Left cardiac atrium (tissue), 4 donors: ENCODE measurements at regions of chr15 and their contacts with region 1.

Region 1: GRCh38 chr15:71114896-71115554 is at the start of gene THSD4:
- DNase-seq: peak; percentile 80
- ATAC-seq: peak; percentile 65 to 71
- total RNA-seq, gene THSD4: 39.8 to 68.3 TPM

Region 2: DNA sequence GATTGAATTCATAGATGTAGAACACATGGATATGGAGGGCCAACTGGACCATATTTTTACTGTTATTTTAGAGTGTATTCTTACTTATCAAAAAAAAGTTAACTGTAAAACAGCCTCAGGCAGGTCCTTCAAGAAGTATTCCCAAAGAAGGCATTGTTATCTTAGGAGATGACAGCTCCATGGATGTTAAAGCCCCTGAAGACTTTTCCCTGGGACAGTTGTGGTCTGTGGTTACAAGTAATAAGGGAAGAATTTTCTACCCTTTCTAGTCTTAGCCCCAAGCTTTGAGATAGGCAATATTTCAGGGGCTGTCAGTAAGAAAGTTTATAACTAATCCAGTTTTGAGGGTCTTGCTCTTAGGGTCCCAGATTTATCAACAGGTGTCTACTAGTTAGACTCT is 159.9 kb before region 1 on chr15:
- intact Hi-C with region 1: no loop called
- DNase-seq: no peak
- ATAC-seq: no peak

Region 3: GRCh38 chr15:71151081-71151480 is 36.1 kb after region 1 on chr15:
- intact Hi-C with region 1: loop called in 1 of 2 experiments (anchors 5 kb)
- DNase-seq: no peak
- ATAC-seq: no peak

Region 4: DNA sequence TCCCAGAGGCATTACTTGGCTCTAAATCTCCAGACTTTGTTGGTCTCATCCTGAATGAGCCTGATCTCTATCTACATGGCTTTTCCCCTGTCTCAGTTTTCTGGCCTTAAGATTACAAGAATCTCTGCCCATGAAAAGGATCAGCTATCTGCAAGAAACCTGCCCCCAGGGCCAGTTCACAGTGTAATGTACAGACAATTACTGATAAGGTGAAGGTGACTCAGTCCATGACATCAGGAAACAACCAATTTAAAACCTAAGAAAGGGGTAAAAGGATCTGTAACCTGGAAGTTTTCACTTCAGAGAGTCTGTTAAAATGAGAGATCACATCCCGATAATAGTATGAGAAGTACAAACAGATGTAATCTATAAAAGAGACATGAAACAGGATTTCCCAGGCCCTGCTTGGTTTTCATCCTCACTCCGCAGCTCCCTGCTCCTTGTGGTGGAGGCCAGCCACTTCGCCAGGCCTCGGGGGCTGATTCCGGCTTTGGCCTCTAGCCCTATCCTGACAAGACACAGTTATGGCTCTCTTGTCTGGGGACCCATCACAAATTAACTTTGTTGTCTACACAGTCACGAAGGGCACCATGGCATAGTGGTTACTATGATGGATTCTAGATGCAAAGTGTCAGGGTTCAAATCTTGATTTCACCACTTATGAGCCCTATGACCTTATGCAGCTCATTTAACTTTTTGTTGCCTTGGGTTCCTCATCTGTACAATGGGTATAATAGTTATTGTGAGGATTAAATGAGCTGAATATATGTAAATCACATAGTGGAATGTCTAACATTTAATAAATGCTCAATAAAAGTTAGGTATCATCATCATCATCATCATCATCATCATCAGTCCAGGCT is 137.2 kb after region 1 on chr15:
- intact Hi-C with region 1: loop called in 1 of 2 experiments (anchors 5 kb)
- DNase-seq: no peak
- ATAC-seq: peak in 1 of 2 donors; percentile 72

Region 5: DNA sequence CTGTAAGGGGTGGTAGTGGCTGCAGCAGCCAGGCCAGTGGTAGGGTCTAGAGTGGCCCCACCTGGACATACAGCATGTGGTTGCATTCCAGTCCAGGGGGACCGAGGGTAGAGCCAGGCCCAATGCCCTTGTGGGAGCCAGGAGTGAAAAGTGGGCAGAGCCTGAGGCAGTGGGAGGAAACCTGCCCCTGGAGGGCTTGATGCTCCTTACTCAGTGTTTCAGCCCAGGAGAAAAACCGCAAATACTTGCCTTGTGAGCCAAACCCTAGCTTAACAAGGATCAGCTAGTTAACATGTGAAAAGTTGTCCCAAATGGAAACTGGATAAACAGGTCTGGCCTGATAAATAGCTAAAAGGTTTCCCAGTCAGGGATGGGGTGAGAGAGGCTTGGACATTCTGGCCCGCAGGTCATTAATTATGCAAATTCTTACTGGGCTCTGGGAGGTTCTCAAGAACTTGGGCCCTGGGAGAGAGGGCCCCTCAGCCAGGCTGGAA is 222.2 kb after region 1 on chr15:
- intact Hi-C with region 1: loop called in 1 of 2 experiments (anchors 5 kb)
- DNase-seq: no peak
- ATAC-seq: no peak

Region 6: DNA sequence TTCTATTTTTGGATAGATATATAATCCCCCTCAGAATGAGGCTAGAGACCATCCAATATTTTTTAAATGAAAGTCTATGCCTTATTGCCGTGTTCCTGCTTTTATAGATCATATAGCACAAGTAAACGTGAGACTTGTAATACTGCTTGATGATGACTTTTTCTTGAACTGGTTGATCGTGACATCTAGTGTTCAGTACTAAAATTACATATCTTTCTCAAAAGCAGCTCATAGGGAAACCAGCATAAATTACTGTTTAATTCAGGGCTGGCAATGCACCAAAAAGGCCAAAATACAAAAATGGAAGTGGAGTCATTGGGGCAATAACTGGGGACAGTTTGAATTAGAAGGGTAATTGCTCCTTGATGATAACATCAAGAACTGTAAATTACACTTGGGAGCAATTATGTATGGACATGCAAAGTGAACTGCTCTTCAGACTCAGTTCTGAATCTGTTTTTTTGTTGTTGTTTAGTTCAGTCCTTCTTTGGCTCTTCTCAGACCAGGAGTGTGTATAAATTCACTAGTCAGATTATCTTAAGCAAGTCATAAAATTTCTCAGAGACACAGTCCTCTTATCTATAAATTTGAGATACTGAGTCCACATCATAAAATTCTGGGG is 325.6 kb after region 1 on chr15:
- intact Hi-C with region 1: loop called (anchors 2 to 10 kb)
- DNase-seq: no peak
- ATAC-seq: peak; percentile 20 to 25

Region 7: GRCh38 chr15:71485099-71485693 is 370.2 kb after region 1 on chr15:
- intact Hi-C with region 1: no loop called
- DNase-seq: no peak
- ATAC-seq: no peak